A673 (cell line): ENCODE measurements at regions of chr12 and their contacts with region 1.

Region 1: GRCh38 chr12:7638760-7639555 is 26.8 kb downstream of the APOBEC1 start:
- DNase-seq: peak; percentile 91
- H3K4me3 ChIP-seq: peak overlapping the region; percentile 27
- H3K27ac ChIP-seq: no peak overlapping the region
- H3K4me1 ChIP-seq: no peaks in the 10 kb centered on the region
- H3K27me3 ChIP-seq: no peaks in the 10 kb centered on the region
- CTCF ChIP-seq: peak; percentile 75

Region 2: DNA sequence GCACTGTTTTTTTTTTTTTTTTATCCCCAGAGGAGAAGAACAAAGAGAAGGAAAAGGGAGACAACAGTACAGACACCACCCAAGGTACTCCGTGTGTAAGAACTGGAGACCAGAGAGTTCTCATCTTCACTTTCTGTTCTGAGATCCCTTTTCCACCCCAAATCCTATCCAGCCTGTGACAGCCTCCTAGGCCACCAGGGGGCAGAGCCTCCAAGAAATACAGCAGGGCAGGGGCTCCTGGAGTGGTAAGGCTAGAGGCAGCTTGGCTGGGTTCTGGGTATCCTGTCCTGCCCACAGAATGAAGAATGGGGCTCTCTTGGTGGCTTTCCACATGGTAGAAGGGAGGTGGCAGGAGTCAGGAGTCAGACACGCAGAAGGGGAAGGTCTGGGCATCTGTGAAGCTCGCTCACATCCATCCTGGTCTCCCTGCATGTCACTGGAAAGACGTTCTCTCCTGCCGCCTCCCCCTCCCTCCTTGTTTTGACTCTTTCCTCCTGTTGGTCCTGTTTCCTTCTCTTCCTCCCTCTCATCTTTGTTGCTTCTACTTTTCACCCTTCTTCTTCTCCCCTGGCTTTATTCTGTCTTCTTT is 496.8 kb before region 1 on chr12:
- CTCF ChIA-PET with region 1: no interaction called
- POLR2A ChIA-PET with region 1: no interaction called
- intact Hi-C with region 1: loop called (anchors 1 kb)
- DNase-seq: peak; percentile 80
- H3K4me3 ChIP-seq: no peak overlapping the region
- H3K27ac ChIP-seq: no peak overlapping the region
- H3K4me1 ChIP-seq: no peaks in the 10 kb centered on the region
- H3K27me3 ChIP-seq: no peaks in the 10 kb centered on the region
- CTCF ChIP-seq: peak; percentile 85

Region 3: GRCh38 chr12:7219599-7220243 is 419.2 kb before region 1 on chr12:
- CTCF ChIA-PET with region 1: no interaction called
- POLR2A ChIA-PET with region 1: no interaction called
- intact Hi-C with region 1: loop called (anchors 1 kb)
- DNase-seq: peak; percentile 75
- H3K4me3 ChIP-seq: no peak overlapping the region
- H3K27ac ChIP-seq: no peak overlapping the region
- H3K4me1 ChIP-seq: no peaks in the 10 kb centered on the region
- H3K27me3 ChIP-seq: no peaks in the 10 kb centered on the region
- CTCF ChIP-seq: peak; percentile 88

Region 4: DNA sequence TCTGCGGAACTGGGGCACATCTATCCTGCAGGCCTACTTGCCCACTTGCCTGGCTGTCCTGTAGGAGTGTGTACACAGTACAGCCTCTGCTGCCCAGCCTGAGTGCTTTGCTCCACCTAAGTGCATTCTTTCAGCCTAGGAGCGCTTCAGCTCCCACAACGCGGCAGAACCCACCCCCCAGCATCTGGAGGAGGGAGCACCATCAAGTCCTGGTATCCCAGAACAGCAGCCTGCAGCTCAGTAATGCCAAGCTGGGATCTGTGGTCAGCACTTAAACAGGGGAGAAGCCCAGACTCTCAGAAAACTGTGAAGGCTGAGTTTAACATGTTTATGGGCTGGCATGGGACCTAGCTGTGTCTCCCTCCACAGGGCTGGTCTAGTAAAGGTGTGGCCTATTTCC is 55.4 kb before region 1 on chr12:
- CTCF ChIA-PET with region 1: no interaction called
- POLR2A ChIA-PET with region 1: no interaction called
- intact Hi-C with region 1: loop called (anchors 2 kb)
- DNase-seq: no peak
- H3K4me3 ChIP-seq: no peak overlapping the region
- H3K27ac ChIP-seq: no peak overlapping the region
- H3K4me1 ChIP-seq: no peaks in the 10 kb centered on the region
- H3K27me3 ChIP-seq: peaks cover 4% of the 10 kb centered on the region
- CTCF ChIP-seq: no peak

Region 5: DNA sequence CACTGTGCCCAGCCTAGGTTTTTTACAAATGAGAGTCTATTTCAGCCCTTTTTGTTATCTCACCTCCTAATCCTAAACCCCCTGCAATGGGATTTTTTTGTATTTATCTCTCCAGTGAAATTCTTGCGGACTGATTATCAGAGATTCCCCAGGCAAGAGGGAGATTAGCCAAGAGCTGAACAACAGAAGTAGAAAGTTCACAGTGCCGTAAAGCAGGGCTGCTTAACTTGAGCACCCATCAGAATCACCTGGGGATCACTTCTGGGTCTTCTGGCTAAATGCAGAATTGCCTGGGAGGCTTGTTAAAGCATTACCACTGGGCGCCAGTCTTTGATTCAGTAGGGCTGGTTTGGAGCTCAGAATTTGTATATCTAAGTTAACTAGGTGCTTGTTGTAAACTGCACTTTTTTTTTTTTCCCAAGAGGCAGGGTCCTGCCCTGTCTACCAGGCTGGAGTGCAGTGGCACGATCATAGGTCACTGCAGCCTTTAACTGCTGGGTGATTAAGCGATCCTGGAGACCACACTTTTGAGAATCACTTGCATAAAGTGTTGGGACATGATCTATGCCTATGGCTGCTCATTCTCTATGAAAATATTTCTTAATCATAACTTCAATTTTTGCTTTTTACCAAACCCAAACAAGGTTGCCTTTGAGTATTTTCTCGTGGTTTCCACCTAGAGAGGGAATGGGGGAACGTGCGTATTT is 71.2 kb after region 1 on chr12:
- CTCF ChIA-PET with region 1: no interaction called
- POLR2A ChIA-PET with region 1: no interaction called
- intact Hi-C with region 1: no loop called
- DNase-seq: no peak
- H3K4me3 ChIP-seq: no peak overlapping the region
- H3K27ac ChIP-seq: no peak overlapping the region
- H3K4me1 ChIP-seq: no peaks in the 10 kb centered on the region
- H3K27me3 ChIP-seq: no peaks in the 10 kb centered on the region
- CTCF ChIP-seq: no peak

Region 6: GRCh38 chr12:7748852-7749251 is 109.9 kb after region 1 on chr12:
- CTCF ChIA-PET with region 1: no interaction called
- POLR2A ChIA-PET with region 1: no interaction called
- intact Hi-C with region 1: no loop called
- DNase-seq: no peak
- H3K4me3 ChIP-seq: no peak overlapping the region
- H3K27ac ChIP-seq: no peak overlapping the region
- H3K4me1 ChIP-seq: no peaks in the 10 kb centered on the region
- H3K27me3 ChIP-seq: no peaks in the 10 kb centered on the region
- CTCF ChIP-seq: no peak

Region 7: DNA sequence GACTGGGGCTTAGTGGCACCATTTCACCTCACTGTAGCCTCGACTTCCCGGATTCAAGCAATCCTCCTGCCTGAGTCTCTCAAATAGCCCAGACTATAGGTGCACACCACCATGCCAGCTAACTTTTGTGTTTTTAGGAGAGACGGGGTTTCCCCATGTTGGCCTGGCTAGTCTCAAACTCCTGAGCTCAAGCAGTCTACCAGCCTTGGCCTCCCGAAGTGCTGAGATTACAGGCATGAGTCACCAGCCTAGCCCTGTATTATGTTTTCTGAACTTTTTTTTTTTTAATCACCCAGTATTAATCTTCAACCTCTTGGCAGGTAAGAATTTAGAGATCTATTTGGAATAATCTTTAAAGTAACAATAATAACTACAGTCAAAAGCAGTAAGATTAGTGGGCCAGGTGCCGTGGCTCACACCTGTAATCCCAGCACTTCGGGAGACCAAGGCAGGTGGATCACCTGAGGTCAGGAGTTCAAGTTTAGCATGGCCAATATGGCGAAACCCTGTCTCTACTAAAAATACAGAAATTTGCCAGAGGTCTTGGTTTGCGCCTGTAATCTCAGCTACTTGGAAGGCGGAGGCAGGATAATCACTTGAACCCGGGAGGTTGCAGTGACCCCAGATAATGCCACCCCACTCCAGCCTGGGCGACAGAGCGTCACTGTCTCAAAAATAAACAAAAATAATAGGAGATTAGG is 158.9 kb after region 1 on chr12:
- CTCF ChIA-PET with region 1: no interaction called
- POLR2A ChIA-PET with region 1: no interaction called
- intact Hi-C with region 1: no loop called
- DNase-seq: peak; percentile 12
- H3K4me3 ChIP-seq: no peak overlapping the region
- H3K27ac ChIP-seq: no peak overlapping the region
- H3K4me1 ChIP-seq: no peaks in the 10 kb centered on the region
- H3K27me3 ChIP-seq: no peaks in the 10 kb centered on the region
- CTCF ChIP-seq: no peak

Region 8: GRCh38 chr12:8026291-8026900 is 387.4 kb after region 1 on chr12:
- CTCF ChIA-PET with region 1: no interaction called
- POLR2A ChIA-PET with region 1: interaction called, 15 read pairs
- intact Hi-C with region 1: no loop called
- DNase-seq: peak; percentile 100
- H3K4me3 ChIP-seq: peak overlapping the region; percentile 53
- H3K27ac ChIP-seq: peak overlapping the region; percentile 99
- H3K4me1 ChIP-seq: no peaks in the 10 kb centered on the region
- H3K27me3 ChIP-seq: no peaks in the 10 kb centered on the region
- CTCF ChIP-seq: no peak